ENCODE measurements at regions of chr3 and their contacts with region 1.

Region 1: GRCh38 chr3:24494618-24495325 is at the start of gene THRB:
- DNase-seq: peak; percentile 72
- ATAC-seq: peak; percentile 55
- H3K4me3 ChIP-seq: peak within 1 kb of the TSS; percentile 95
- H3K27ac ChIP-seq: peak within 1 kb of the TSS; percentile 73
- H3K4me1 ChIP-seq: peaks cover 54% of the 10 kb centered on the region
- H3K27me3 ChIP-seq: no peaks in the 10 kb centered on the region
- CTCF ChIP-seq: no peak
- total RNA-seq, gene THRB: 7.0 and 9.7 TPM in 2 replicates

Region 2: DNA sequence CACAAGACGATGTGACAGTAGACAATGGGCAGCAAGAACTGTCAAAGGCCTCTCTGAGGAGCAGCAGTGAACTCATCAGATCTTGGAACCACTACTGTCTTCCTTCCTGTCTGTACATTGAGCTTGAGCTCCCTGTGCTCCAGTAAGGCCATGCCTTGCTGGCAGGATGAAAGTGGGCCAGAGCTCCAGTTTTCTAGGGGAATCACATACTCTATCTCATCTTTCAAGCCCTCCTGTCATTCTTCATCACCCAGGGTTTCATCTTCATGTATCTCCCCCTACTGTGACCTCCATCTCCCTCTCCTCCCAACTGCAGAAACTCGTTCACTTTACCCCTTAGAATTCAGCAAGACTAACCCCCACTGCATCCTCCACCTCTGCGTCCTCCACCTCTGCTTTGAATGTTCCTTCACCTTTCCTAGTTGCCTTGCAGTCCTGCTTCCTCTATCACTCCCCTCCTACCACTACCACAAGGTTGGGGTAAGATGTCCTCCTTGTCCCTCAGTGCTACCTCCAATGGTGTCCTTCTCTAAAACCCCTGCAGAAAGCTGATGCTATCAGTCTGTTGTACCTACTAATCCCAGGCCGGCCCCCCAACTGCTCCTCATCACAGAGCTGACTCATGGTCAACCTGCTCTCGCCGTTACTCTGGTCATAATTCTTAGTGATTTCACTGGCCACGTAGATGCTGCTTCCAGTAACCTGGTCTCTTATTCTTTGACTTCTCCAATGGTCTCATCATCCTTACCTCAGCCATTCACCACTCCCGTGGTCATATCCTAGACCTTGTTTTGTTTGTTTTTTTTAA is 600.3 kb before region 1 on chr3:
- CTCF ChIA-PET with region 1: no interaction called
- POLR2A ChIA-PET with region 1: no interaction called
- intact Hi-C with region 1: no loop called
- DNase-seq: no peak
- ATAC-seq: no peak
- H3K4me3 ChIP-seq: no peak overlapping the region
- H3K27ac ChIP-seq: no peak overlapping the region
- H3K4me1 ChIP-seq: 0 out of 2 replicates have a peak, but pooled peaks cover under 1% of the 10 kb centered on the region
- H3K27me3 ChIP-seq: no peaks in the 10 kb centered on the region
- CTCF ChIP-seq: no peak

Region 3: DNA sequence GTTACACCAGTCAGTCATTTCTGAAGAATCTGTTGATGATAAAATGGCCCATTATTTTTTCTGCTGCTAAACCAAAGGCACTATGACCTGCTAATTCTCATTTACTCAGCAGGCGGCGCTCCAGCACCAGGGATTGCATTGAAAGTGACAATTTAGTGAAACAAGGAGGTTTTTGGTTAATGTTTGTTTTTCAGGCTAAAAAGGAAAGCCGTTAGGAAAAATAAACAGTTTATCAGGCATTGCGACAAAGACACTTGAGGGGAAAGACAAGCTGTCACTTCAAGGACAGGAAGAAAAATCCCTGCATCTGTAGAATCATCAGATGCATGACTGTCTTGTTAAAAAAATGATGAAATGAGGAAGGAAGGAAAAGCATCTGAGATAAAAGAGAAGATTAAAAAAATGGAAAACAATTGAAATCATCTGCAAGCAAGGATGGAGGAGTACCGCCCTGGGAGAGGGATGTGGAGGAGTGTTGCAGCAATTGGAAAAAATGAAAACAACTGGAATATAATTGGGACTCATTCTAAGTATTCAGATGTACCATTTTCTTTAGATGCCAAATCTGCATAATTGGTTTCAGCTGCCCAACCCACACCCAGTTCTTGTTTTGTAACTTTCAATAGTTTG is 495.6 kb before region 1 on chr3:
- CTCF ChIA-PET with region 1: no interaction called
- POLR2A ChIA-PET with region 1: no interaction called
- intact Hi-C with region 1: loop called (anchors 10 kb)
- DNase-seq: peak; percentile 86
- ATAC-seq: peak; percentile 55
- H3K4me3 ChIP-seq: no peak overlapping the region
- H3K27ac ChIP-seq: no peak overlapping the region
- H3K4me1 ChIP-seq: no peaks in the 10 kb centered on the region
- H3K27me3 ChIP-seq: no peaks in the 10 kb centered on the region
- CTCF ChIP-seq: peak; percentile 98

Region 4: DNA sequence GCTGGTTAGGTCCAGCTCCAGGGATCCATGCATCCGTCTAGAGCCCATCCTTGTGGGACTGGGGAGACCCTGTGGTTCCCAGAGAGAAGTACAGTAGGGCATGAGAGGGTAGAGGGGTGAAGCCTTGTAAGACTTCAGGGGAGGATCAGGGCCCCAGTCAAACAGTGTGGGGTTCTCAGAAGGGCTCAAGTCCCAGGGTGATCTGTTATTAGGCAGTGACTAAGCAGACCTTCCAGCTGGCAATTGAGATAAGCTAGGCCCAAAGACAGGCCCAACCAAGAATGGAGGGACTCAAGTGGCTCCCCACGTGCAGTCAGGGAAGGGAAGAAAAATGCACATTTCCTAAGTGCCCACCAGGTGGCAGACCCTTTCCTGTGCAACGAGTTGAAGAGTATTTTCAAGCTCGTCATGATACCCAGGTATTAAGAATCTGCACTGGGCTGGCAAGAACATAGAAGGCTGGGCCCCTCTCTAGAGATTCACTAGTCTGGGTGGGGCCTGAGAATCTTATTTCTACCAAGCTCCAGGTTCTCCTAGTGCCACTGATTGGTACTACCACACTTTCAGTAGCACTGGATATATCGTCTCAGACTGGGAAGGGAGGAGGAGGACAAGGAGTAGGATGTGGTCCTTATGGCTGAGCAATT is 308.9 kb before region 1 on chr3:
- CTCF ChIA-PET with region 1: interaction called, 5 read pairs
- POLR2A ChIA-PET with region 1: no interaction called
- intact Hi-C with region 1: loop called (anchors 5 kb)
- DNase-seq: peak; percentile 81
- ATAC-seq: peak; percentile 91
- H3K4me3 ChIP-seq: no peak overlapping the region
- H3K27ac ChIP-seq: no peak overlapping the region
- H3K4me1 ChIP-seq: no peaks in the 10 kb centered on the region
- H3K27me3 ChIP-seq: no peaks in the 10 kb centered on the region
- CTCF ChIP-seq: peak; percentile 85

Region 5: GRCh38 chr3:24270204-24270691 is 224.5 kb before region 1 on chr3:
- CTCF ChIA-PET with region 1: interaction called, 3 read pairs
- POLR2A ChIA-PET with region 1: no interaction called
- intact Hi-C with region 1: loop called (anchors 1 kb)
- DNase-seq: no peak
- ATAC-seq: no peak
- H3K4me3 ChIP-seq: no peak overlapping the region
- H3K27ac ChIP-seq: no peak overlapping the region
- H3K4me1 ChIP-seq: peaks cover 32% of the 10 kb centered on the region
- H3K27me3 ChIP-seq: no peaks in the 10 kb centered on the region
- CTCF ChIP-seq: no peak

Region 6: GRCh38 chr3:24514119-24514518 is 19.3 kb after region 1 on chr3:
- CTCF ChIA-PET with region 1: no interaction called
- POLR2A ChIA-PET with region 1: no interaction called
- intact Hi-C with region 1: loop called (anchors 1 kb)
- DNase-seq: peak; percentile 83
- ATAC-seq: peak; percentile 77
- H3K4me3 ChIP-seq: peak overlapping the region; percentile 36; the same call in 1 of the 2 replicates
- H3K27ac ChIP-seq: peak overlapping the region; percentile 89
- H3K4me1 ChIP-seq: peaks cover 41% of the 10 kb centered on the region
- H3K27me3 ChIP-seq: no peaks in the 10 kb centered on the region
- CTCF ChIP-seq: no peak

Region 7: GRCh38 chr3:24640330-24640877 is 145.6 kb after region 1 on chr3:
- CTCF ChIA-PET with region 1: no interaction called
- POLR2A ChIA-PET with region 1: no interaction called
- intact Hi-C with region 1: loop called (anchors 1 kb)
- DNase-seq: peak; percentile 74
- ATAC-seq: peak; percentile 94
- H3K4me3 ChIP-seq: no peak overlapping the region
- H3K27ac ChIP-seq: no peak overlapping the region
- H3K4me1 ChIP-seq: peaks cover 16% of the 10 kb centered on the region
- H3K27me3 ChIP-seq: no peaks in the 10 kb centered on the region
- CTCF ChIP-seq: peak; percentile 95

Measured in PC-3 (cell line).